ENCODE measurements at regions of chr15 and their contacts with region 1.

Region 1: DNA sequence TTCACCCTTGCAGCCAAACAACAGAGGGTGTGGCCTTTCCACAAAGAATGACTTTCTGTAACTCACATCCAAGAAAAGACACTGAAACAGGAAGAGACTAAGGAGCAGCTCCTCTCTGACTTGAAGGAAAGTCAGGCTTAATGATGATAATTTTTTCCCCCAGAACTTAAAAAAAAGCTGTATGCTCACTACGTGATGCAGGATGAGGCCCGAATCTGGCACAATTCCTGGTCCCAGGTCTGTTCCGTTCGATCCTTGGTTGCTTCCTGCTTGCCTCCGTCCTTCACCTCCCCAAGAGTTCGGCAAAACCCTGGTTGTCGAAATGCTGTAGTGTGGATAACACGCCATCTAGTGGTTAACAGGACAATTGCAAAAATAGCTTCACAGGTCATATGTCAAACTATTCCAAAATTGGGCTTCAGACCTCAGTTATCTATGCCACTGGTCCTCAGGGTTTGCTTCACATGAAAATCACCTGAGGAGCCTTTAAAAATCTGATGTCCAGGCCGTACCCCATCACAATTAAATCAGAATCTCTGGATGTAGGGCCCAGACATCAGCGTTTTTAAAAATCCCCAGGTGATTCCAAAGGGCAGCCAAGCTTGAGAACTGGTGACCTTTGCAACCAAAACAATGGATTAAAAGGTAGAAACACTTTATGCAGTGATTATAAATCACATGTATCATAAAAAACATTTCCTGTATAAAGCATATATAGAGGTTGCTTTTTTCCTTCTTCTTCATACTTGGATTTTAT is 28.1 kb upstream of the SYNM start:
- DNase-seq: peak; percentile 61
- H3K4me3 Mint-ChIP-seq: peak overlapping the region; percentile 56
- H3K27ac Mint-ChIP-seq: peak overlapping the region; percentile 43
- H3K4me1 Mint-ChIP-seq: peaks cover 10% of the 10 kb centered on the region
- H3K27me3 Mint-ChIP-seq: peaks cover 57% of the 10 kb centered on the region
- CTCF ChIP-seq: peak; percentile 66

Region 2: GRCh38 chr15:98311566-98312188 is 765.1 kb before region 1 on chr15:
- CTCF ChIA-PET with region 1: interaction called, 3 read pairs
- intact Hi-C with region 1: loop called (anchors 2 kb)
- DNase-seq: peak; percentile 82
- H3K4me3 Mint-ChIP-seq: no peak overlapping the region
- H3K27ac Mint-ChIP-seq: no peak overlapping the region
- H3K4me1 Mint-ChIP-seq: no peaks in the 10 kb centered on the region
- H3K27me3 Mint-ChIP-seq: peaks cover 45% of the 10 kb centered on the region
- CTCF ChIP-seq: peak; percentile 77

Region 3: GRCh38 chr15:98428253-98428989 is 648.3 kb before region 1 on chr15:
- CTCF ChIA-PET with region 1: interaction called, 4 read pairs
- intact Hi-C with region 1: loop called (anchors 5 kb)
- DNase-seq: peak; percentile 91
- H3K4me3 Mint-ChIP-seq: peak overlapping the region; percentile 66
- H3K27ac Mint-ChIP-seq: no peak overlapping the region
- H3K4me1 Mint-ChIP-seq: no peaks in the 10 kb centered on the region
- H3K27me3 Mint-ChIP-seq: peaks cover 40% of the 10 kb centered on the region
- CTCF ChIP-seq: peak; percentile 90

Region 4: DNA sequence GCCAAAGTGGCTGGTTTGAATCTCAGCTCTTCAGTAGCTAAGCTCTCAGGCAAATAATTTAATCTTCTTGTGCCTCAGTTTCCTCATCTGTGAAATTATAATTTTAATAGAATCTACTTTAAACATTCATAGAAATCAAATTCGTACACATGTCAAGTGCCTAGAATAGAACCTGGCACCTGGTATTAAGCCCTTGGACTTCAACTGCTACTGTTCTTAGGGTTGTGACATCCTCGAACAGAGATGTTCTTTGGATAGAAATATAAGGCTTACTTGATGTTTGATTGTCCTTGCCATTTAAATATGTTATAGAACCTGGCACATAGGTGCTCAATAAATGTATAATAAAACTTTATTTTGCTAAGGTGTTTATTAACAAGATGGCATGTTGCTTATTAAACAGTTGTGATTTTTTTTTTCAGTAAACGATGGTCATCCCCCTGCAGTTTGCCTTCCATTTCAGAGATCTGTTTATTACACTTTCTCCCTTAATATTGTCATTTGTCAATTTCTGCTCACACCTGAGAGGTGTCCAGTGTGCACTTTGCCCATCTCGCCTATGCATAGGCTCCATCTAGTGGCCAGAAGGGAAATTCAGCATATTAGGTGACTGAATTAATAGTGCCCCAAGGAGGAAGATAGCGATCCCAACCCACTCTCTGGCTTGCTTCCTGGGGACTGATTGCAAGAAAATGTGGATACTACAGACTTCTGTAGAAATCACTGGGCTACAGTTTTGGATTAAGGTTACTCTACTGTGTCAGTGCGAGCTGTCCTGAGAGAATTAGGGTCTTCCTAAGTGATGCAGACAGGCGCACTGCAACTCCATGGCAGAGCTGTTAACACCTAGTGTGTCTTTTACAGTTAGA is 417.7 kb before region 1 on chr15:
- CTCF ChIA-PET with region 1: no interaction called
- intact Hi-C with region 1: loop called (anchors 10 kb)
- DNase-seq: peak; percentile 71
- H3K4me3 Mint-ChIP-seq: no peak overlapping the region
- H3K27ac Mint-ChIP-seq: no peak overlapping the region
- H3K4me1 Mint-ChIP-seq: peaks cover 43% of the 10 kb centered on the region
- H3K27me3 Mint-ChIP-seq: no peaks in the 10 kb centered on the region
- CTCF ChIP-seq: peak; percentile 68

Region 5: GRCh38 chr15:98779463-98780071 is 297.2 kb before region 1 on chr15:
- CTCF ChIA-PET with region 1: no interaction called
- intact Hi-C with region 1: loop called (anchors 10 kb)
- DNase-seq: peak; percentile 87
- H3K4me3 Mint-ChIP-seq: no peak overlapping the region
- H3K27ac Mint-ChIP-seq: no peak overlapping the region
- H3K4me1 Mint-ChIP-seq: peaks cover 35% of the 10 kb centered on the region
- H3K27me3 Mint-ChIP-seq: no peaks in the 10 kb centered on the region
- CTCF ChIP-seq: peak; percentile 94

Region 6: DNA sequence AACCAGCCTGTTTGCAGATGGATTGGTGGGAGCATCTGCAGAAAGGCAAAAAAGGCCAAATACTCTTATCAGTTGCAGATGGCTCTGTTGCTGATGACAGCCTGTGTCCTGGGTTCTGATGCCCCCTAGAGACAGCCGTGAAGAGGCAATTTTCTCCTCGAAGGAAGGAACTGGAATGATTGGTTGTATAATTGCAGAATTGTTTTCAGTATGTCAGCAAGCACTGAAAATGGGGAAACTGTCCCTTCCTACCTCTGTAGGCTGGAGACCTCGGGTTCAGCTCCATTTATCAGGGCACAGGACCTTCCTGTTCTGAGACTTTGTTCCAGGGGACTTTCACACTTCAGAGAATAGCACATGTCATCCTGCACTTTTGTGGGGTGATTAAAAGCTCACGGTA is 172.2 kb before region 1 on chr15:
- CTCF ChIA-PET with region 1: no interaction called
- intact Hi-C with region 1: loop called (anchors 10 kb)
- DNase-seq: peak; percentile 55
- H3K4me3 Mint-ChIP-seq: no peak overlapping the region
- H3K27ac Mint-ChIP-seq: no peak overlapping the region
- H3K4me1 Mint-ChIP-seq: peaks cover 11% of the 10 kb centered on the region
- H3K27me3 Mint-ChIP-seq: no peaks in the 10 kb centered on the region
- CTCF ChIP-seq: peak; percentile 40

Measured in Calu3 (cell line).